ENCODE measurements at regions of chr6 and their contacts with region 1.

Region 1: DNA sequence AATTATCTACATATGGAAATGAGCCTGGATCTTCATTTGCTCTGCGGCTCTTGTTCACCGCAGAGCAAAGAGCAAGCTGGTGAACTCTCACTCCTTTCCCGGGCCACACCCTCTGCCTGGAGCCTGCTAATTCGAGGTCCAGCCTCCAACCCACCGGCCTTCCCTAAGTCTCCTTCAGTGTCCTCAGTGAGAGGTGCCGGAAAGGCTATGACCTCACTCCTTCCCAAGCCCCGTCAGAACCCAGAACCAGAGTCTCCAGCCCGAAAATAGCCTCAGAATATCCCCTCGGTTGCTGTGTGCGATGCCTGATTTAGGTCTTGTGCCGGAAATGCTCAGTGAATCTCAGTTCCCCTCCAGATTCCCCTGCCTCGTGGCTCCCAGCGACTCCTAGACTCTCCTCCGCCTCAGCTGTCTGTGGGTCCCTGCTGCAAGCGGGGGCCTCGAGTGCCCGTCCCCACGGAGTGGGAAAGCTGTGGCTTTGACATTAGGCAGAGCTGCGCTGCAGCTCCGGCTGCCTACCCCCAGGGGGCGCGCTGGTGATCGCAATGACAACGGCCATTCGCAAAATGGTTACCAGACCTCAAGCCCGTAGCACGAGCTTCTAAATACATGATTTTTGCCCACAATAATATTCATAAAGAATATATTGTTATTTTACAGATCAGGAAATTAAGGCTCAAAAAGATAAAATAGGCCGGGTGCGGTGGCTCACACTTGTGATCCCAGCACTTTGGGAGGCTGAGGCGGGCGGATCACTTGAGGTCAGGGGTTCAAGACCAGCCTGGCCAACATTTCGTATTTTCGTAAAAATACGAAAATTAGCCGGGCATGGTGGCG is 4.1 kb upstream of the BNIP5 start:
- DNase-seq: peak; percentile 51 to 79 (median 70)
- ATAC-seq: peak; percentile 82
- H3K4me3 ChIP-seq: no peak overlapping the region
- H3K4me3 Mint-ChIP-seq: peak overlapping the region; percentile 60
- H3K27ac ChIP-seq: no peak overlapping the region
- H3K27ac Mint-ChIP-seq: no peak overlapping the region
- H3K4me1 ChIP-seq: peaks cover 5% of the 10 kb centered on the region
- H3K4me1 Mint-ChIP-seq: peaks cover 13% of the 10 kb centered on the region
- H3K27me3 ChIP-seq: peaks cover 0 to 7% of the 10 kb centered on the region in 2 experiments
- H3K27me3 Mint-ChIP-seq: peaks cover 25% of the 10 kb centered on the region
- CTCF ChIP-seq: peak; percentile 99

Region 2: DNA sequence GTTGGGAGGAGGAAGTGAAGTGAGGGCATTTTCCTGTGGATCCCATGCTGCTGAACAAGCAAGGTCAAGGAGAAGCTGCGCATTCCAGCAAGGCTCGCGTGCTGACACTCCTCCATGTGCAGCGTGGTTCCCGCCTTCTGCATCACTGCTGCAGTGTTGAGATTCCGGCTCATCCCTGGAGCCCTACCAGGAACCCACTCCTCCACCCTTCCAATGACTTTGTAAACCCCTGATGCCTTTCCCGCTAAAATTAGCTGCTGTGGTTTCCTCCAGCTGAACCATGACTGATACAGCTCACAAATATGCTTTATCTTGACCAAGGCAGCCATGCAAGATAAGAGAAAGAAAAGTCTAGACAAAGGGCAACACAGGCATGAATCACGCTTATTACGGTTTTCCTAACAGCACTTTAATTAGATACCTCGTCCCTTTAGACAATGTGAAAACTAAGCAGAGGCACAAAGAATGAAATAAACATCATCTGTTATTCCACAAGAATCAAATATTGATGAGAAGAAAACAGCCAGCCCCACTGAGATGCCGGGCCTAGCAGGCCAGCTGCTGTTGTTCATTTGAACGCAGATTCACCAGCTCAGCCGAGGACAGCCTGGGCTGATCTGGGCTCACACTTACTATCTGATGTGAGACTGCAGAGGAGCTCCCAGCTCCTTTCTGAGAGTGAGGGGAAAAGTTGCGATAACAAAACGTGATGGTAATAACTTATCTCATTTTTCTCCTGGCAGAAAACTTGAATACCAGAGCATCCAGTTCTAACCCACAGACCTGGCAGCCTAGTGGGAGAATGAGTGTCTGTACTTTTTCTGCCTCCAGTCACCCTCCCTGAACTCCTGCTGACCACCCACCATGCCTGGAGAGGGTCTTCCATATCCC is 10.1 kb after region 1 on chr6:
- CTCF ChIA-PET with region 1: interaction called, 47 read pairs
- POLR2A ChIA-PET with region 1: no interaction called
- intact Hi-C with region 1: no loop called
- DNase-seq: no peak
- ATAC-seq: no peak
- H3K4me3 ChIP-seq: no peak overlapping the region
- H3K4me3 Mint-ChIP-seq: no peak overlapping the region
- H3K27ac ChIP-seq: no peak overlapping the region
- H3K27ac Mint-ChIP-seq: no peak overlapping the region
- H3K4me1 ChIP-seq: no peaks in the 10 kb centered on the region
- H3K4me1 Mint-ChIP-seq: peaks cover 2% of the 10 kb centered on the region
- H3K27me3 ChIP-seq: no peaks in the 10 kb centered on the region
- H3K27me3 Mint-ChIP-seq: peaks cover 3% of the 10 kb centered on the region
- CTCF ChIP-seq: no peak

Region 3: DNA sequence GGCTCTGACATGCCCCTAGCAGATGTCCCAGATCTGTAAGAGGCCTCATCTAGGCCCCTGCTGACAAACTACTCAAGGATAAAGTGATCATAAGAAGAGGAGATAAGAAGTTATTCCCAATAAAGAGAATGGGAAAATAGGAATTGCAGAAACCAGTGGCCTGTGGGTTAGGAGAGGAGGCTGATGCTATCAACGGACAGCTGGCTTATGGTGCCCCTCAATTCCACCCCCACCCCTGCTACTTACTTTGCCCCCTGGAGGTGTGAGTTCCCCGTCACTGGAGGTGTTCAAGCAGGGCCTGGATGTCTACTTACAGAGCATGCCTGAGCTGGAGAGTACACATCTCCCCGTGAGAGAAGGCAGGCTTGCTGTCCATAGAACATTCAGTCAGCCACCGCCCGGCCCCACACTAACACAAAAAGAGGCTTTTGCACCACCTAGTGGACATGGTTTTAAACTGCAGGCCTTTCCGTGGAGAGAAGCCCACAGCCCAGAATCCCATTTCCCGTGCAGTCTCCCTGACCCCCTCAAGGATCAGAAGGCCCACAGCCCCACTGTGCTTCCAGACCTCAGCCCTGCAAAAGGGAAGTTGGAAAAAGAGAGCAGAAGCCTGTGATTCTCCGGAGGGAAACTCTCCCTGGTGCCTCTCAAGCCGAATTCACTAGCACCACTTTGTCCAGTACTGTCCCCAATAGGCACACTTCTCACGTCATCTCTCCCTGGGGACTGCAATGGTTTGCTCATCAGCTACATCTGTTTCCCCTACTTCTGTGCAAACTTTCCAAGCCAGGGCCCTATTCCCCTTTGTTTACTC is 19.6 kb after region 1 on chr6:
- CTCF ChIA-PET with region 1: interaction called, 47 read pairs
- POLR2A ChIA-PET with region 1: no interaction called
- intact Hi-C with region 1: loop called (anchors 1 kb)
- DNase-seq: peak; percentile 38 to 81 (median 69)
- ATAC-seq: peak; percentile 93
- H3K4me3 ChIP-seq: no peak overlapping the region
- H3K4me3 Mint-ChIP-seq: no peak overlapping the region
- H3K27ac ChIP-seq: no peak overlapping the region
- H3K27ac Mint-ChIP-seq: no peak overlapping the region
- H3K4me1 ChIP-seq: peaks cover 4% of the 10 kb centered on the region
- H3K4me1 Mint-ChIP-seq: peaks cover 11% of the 10 kb centered on the region
- H3K27me3 ChIP-seq: no peaks in the 10 kb centered on the region
- H3K27me3 Mint-ChIP-seq: peaks cover 3% of the 10 kb centered on the region
- CTCF ChIP-seq: peak; percentile 74

Measured in CD8-positive, alpha-beta T cell (primary cell).